ENCODE measurements at regions of chr14 and their contacts with region 1.

Region 1: DNA sequence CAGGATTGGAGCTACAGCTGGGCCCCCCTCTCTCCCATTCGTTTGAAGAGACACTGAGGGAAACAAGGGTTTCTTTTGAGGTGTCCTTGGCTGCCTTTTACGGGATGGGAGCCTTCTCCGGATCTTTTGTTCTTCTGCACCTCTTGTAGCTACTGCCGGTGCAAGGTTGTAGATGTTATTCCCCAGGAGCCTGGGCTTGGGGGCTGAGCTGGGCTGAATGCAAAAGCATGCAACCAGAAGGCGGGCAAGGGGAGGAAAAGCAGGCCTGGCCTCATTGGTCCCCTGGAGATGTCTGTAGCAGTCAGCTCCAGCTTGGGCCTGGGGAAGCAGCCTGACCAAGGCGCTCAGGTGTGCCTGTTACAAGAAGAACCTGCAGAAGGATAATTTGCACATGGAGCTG is 110.3 kb downstream of the GCH1 start:
- DNase-seq: no peak
- H3K4me3 Mint-ChIP-seq: no peak overlapping the region
- H3K27ac Mint-ChIP-seq: no peak overlapping the region
- H3K4me1 Mint-ChIP-seq: no peaks in the 10 kb centered on the region
- H3K27me3 Mint-ChIP-seq: peaks cover 13% of the 10 kb centered on the region

Region 2: DNA sequence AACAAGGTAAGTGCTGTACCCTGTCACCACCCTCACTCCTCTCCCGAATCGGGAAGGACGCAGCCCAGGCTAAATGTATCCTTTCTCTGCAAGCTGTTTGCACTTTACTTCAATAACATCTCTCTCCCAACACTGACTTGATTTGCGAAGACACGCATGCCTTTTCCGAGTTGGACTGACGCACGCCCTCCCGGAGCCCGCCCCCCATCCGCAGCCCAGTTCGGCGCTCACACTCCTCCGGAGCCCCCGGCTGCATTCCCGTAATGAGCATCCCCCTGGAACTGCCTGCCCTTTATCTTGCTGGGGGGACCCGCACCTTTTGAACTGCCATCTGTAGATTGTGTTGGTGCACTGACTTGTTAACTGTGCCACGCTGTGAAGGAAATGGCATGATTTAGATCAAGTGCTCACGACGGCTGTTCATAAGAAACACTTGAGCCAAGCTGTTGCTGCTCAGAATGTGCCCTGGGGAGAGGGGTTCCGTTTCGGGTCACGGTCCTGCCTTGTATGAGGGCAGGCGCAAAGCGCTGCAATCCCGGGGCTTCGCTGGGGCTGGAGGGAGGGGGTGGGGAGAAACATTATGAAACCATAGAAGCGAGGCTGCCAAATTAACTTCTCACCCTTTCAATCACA is 572.1 kb before region 1 on chr14:
- CTCF ChIA-PET with region 1: no interaction called
- DNase-seq: no peak
- H3K4me3 Mint-ChIP-seq: no peak overlapping the region
- H3K27ac Mint-ChIP-seq: no peak overlapping the region
- H3K4me1 Mint-ChIP-seq: peaks cover 4% of the 10 kb centered on the region
- H3K27me3 Mint-ChIP-seq: peaks cover 52% of the 10 kb centered on the region

Region 3: GRCh38 chr14:54691525-54692283 is 100.6 kb before region 1 on chr14:
- CTCF ChIA-PET with region 1: no interaction called
- DNase-seq: peak; percentile 59
- H3K4me3 Mint-ChIP-seq: no peak overlapping the region
- H3K27ac Mint-ChIP-seq: no peak overlapping the region
- H3K4me1 Mint-ChIP-seq: no peaks in the 10 kb centered on the region
- H3K27me3 Mint-ChIP-seq: peaks cover 32% of the 10 kb centered on the region

Region 4: DNA sequence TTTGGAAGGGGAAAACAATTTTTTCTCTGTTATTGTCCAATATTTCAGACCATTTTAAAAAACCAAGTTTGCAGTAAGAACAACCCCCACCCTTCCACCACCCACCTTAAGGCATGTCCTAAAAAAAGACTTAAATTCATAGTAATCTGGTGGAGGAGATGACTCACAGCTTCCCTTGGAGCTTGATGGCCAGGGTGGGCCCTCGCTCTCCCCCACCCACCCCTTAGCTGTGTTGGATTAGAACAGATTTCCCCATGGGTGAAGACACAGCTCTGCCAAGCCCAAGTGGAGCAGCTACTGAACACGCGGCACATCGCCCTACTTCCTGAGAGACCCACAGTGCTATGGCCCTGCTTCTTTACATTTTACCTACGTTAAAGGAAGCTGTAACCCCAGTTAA is 30.0 kb before region 1 on chr14:
- CTCF ChIA-PET with region 1: no interaction called
- DNase-seq: peak; percentile 5
- H3K4me3 Mint-ChIP-seq: no peak overlapping the region
- H3K27ac Mint-ChIP-seq: no peak overlapping the region
- H3K4me1 Mint-ChIP-seq: peaks cover 11% of the 10 kb centered on the region
- H3K27me3 Mint-ChIP-seq: peaks cover 14% of the 10 kb centered on the region

Region 5: GRCh38 chr14:54805521-54806322 is 13.4 kb after region 1 on chr14:
- CTCF ChIA-PET with region 1: interaction called, 17 read pairs
- DNase-seq: peak; percentile 85
- H3K4me3 Mint-ChIP-seq: no peak overlapping the region
- H3K27ac Mint-ChIP-seq: no peak overlapping the region
- H3K4me1 Mint-ChIP-seq: peaks cover 4% of the 10 kb centered on the region
- H3K27me3 Mint-ChIP-seq: peaks cover 56% of the 10 kb centered on the region